ENCODE measurements at regions of chr20 and their contacts with region 1.

Region 1: DNA sequence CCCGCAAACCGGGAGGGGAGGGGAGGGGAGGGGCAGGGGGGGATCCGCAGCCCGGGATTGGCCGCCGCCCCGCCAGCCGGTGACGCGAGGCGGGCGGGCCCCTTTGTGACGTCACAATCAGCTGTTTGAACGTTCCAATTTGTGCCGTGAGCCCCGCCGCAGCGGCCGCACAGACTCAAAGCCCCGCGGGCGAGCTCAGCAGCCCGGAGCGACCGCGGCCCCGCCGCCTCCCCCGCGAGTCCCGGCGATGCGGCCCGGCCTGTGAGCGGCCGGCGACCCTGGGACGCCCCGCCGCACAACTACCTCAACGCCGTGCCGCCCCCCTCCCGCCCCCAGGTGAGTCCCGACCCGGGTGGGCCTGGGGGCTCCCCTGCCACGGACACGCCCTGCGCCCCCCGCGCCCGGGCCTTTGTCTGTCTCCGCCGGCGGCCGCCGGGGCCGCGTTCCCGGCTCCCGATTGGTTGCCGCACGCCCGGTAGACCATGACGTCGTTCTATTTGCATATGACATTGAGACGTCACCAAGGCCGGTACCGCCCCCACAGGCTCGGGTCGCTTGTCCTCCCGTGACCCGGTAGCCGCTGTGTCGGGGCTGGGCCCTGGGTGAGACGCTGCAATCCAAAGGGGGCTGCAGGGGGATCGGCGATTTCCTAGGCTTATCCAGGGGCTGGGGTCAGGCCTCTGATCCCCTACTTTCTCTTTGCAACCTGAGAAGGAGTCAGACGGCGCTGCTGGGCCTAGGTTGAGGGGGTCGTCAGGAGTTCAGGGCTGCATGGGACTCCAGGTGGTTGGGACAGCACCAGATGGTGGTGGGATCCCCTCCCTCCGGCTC is at the start of gene TP53INP2:
- DNase-seq: peak; percentile 82 to 93 (median 87)
- ATAC-seq: peak; percentile 78
- H3K4me3 ChIP-seq: peak within 1 kb of the TSS; percentile 59
- H3K4me3 Mint-ChIP-seq: peak within 1 kb of the TSS; percentile 91 to 98 (median 94)
- H3K27ac ChIP-seq: peak within 1 kb of the TSS; percentile 94
- H3K27ac Mint-ChIP-seq: peak within 1 kb of the TSS; percentile 79 to 100 (median 97)
- H3K4me1 ChIP-seq: peaks cover 6 to 7% of the 10 kb centered on the region in 2 donors
- H3K4me1 Mint-ChIP-seq: peaks cover 15 to 39% (median 25%) of the 10 kb centered on the region in 7 donors
- H3K27me3 ChIP-seq: no peaks in the 10 kb centered on the region
- H3K27me3 Mint-ChIP-seq: peaks cover 0 to 25% (median 6%) of the 10 kb centered on the region in 5 donors
- total RNA-seq, gene TP53INP2: 1.2 to 41.4 (median 1.5) TPM

Region 2: DNA sequence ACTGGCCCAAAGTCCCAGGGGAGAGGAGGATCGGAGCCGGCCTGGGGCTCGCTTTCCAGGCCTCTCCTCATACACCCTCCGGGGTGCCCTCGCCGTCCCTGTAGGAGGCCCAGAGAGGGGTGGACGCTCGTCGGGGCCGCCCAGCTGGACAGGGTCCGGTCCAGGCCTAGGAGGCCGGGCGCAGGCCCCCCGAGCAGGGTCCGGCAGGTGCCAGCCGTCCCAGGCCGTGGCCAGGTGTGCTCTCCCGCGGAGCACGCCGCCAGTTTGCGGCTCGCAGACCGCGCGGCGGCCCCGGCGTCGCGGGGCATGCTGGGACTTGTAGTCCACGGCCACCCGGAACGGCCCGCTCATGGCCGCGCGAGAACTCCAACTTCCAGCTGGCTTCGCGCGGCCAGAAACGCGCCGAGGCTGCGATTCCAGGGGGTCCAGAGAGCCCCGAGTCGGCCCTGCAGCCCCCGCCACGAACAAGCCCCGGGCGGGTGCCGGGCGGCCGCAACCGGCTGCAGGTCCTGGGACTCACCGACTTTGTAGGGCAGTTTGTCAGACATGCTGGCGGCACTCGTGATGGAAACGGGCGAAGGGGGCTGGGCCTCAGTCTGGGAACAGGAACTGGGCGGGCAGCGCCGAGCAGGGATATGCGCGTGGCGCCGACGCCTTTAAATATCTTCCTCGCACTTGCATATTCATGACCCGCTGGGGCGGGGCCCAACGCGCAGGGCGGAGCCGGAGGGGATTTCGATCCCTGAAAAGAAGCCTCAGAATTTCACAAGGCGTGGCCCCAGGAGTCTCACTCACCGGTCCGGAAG is 401.5 kb before region 1 on chr20 and contains the start of gene AHCY:
- CTCF ChIA-PET with region 1: no interaction called
- POLR2A ChIA-PET with region 1: interaction called, 5 read pairs
- intact Hi-C with region 1: loop called in 1 of 2 experiments (anchors 1 kb)
- DNase-seq: peak; percentile 84 to 95 (median 92)
- ATAC-seq: peak; percentile 96
- H3K4me3 ChIP-seq: peak within 1 kb of the TSS; percentile 91
- H3K4me3 Mint-ChIP-seq: peak within 1 kb of the TSS; percentile 90 to 96 (median 91)
- H3K27ac ChIP-seq: peak within 1 kb of the TSS; percentile 87
- H3K27ac Mint-ChIP-seq: peak within 1 kb of the TSS; percentile 89 to 95 (median 93)
- H3K4me1 ChIP-seq: peaks cover 3 to 6% of the 10 kb centered on the region in 2 donors
- H3K4me1 Mint-ChIP-seq: peaks cover 0 to 27% (median 14%) of the 10 kb centered on the region in 7 donors
- H3K27me3 ChIP-seq: no peaks in the 10 kb centered on the region
- H3K27me3 Mint-ChIP-seq: peaks cover 0 to 2% (median 0%) of the 10 kb centered on the region in 5 donors
- total RNA-seq, gene AHCY: 19.1 to 62.9 (median 23.7) TPM

Region 3: DNA sequence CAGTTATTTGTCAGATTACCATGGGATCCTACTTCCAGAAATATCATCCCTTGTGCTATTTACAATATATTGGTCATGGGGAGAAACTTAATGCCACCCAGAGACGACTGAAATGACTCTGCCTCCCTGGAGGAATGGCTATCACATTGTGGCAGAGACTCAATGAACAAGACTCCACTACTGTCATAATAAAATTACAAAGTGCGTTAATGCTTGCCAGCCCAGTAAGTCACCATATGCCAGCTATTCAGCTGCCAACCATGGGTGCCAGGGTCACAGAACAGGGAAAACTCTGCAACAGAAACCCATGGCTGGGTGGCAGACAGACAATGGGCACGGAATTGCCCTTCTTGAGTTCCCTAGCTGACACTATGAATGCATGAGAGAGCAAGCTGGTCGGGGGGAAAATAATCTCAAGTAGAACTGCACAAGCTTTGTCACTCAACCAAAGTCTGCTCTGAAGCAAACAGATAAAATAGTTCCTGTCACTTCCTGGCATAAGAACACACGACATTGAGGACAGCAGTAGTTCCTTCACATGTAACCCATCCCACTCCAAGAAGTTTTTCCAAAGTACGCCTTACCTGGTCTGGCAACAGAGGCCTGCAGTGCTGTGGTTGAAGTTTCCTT is 31.8 kb after region 1 on chr20:
- CTCF ChIA-PET with region 1: no interaction called
- POLR2A ChIA-PET with region 1: no interaction called
- intact Hi-C with region 1: no loop called
- DNase-seq: no peak
- ATAC-seq: no peak
- H3K4me3 ChIP-seq: no peak overlapping the region
- H3K4me3 Mint-ChIP-seq: no peak overlapping the region
- H3K27ac ChIP-seq: no peak overlapping the region
- H3K27ac Mint-ChIP-seq: no peak overlapping the region
- H3K4me1 ChIP-seq: no peaks in the 10 kb centered on the region
- H3K4me1 Mint-ChIP-seq: peaks cover 0 to 2% (median 0%) of the 10 kb centered on the region in 7 donors
- H3K27me3 ChIP-seq: no peaks in the 10 kb centered on the region
- H3K27me3 Mint-ChIP-seq: no peaks in the 10 kb centered on the region

Region 4: DNA sequence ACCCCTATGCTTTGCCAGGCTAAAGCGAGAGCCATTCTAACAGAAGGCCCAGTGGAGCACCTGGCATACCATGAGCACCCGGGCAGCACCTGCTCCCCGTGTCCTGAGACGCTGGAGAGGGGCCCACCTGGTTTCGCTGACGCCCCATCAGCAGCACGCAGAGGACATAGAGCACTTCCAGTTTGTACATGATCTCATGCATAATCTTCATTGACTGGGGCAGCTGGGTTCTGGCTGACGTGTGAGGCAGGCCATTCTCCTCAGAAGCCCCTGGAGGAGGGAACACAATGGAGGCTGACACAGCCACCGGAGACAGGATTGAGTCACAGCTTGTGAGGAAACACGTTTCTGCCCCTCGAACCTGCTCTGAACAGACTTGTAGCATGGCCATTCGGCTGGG is 316.7 kb after region 1 on chr20:
- CTCF ChIA-PET with region 1: no interaction called
- POLR2A ChIA-PET with region 1: no interaction called
- intact Hi-C with region 1: no loop called
- DNase-seq: no peak
- ATAC-seq: no peak
- H3K4me3 ChIP-seq: no peak overlapping the region
- H3K4me3 Mint-ChIP-seq: no peak overlapping the region
- H3K27ac ChIP-seq: no peak overlapping the region
- H3K27ac Mint-ChIP-seq: peak overlapping the region in 1 of 9 donors; percentile 56
- H3K4me1 ChIP-seq: no peaks in the 10 kb centered on the region
- H3K4me1 Mint-ChIP-seq: peaks cover 0 to 4% (median 0%) of the 10 kb centered on the region in 7 donors
- H3K27me3 ChIP-seq: no peaks in the 10 kb centered on the region
- H3K27me3 Mint-ChIP-seq: no peaks in the 10 kb centered on the region

Measured in naive thymus-derived CD4-positive, alpha-beta T cell (primary cell).